Activated T-helper 2 cell treated with anti-CD3 and anti-CD28 coated beads, Interferon-gamma antibody, Interleukin-2, Interleukin-4, amounts not matched to agents 10 μg/mL and 5 μg/mL and 100 μg/mL, durations not matched to agents 14 hours and 24 hours and 36 hours (primary cell): ENCODE measurements at regions of chr7 and their contacts with region 1.

Region 1: GRCh38 chr7:105808703-105809590 is 67.5 kb downstream of the ATXN7L1 start:
- DNase-seq: peak; percentile 85
- H3K4me3 Mint-ChIP-seq: peak overlapping the region; percentile 26
- H3K27ac Mint-ChIP-seq: peak overlapping the region; percentile 81
- H3K4me1 Mint-ChIP-seq: peaks cover 76% of the 10 kb centered on the region
- H3K27me3 Mint-ChIP-seq: no peaks in the 10 kb centered on the region

Region 2: DNA sequence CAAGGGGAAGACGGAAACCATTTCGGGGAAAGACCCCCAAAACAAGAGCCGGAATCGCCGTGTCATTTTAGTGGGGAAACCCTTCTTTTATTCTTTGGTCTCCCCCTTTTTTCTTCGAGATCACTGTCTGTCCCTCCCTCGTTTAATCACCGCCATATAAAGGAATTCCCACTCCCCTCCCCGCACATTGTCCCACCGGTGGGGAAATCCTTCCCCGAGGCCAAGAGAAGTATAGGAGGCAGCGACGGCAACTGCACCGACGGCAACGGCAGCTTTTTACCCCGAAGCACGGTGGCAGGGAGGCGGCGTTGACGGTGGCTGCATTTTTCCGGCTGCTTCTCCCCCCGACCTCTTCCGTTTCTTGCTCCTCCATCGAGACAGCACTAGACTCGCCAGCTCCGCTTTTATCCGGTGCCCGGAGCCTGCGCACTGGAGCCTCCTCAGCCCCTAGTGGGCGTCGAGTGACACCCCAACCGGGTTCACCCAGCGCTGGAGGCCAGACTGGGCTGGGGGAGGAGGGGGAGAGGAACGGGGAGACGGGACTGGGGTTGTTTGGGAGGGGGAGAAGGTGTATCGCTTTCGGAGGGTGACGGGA is 795.6 kb before region 1 on chr7:
- intact Hi-C with region 1: loop called (anchors 5 kb)
- DNase-seq: peak; percentile 92
- H3K4me3 Mint-ChIP-seq: peak overlapping the region; percentile 91
- H3K27ac Mint-ChIP-seq: peak overlapping the region; percentile 100
- H3K4me1 Mint-ChIP-seq: peaks cover 35% of the 10 kb centered on the region
- H3K27me3 Mint-ChIP-seq: no peaks in the 10 kb centered on the region

Region 3: GRCh38 chr7:105691733-105692564 is 117.0 kb before region 1 on chr7:
- intact Hi-C with region 1: loop called (anchors 1 kb)
- DNase-seq: peak; percentile 44
- H3K4me3 Mint-ChIP-seq: peak overlapping the region; percentile 89
- H3K27ac Mint-ChIP-seq: peak overlapping the region; percentile 85
- H3K4me1 Mint-ChIP-seq: peaks cover 30% of the 10 kb centered on the region
- H3K27me3 Mint-ChIP-seq: no peaks in the 10 kb centered on the region

Region 4: GRCh38 chr7:105849122-105849855 is 40.3 kb after region 1 on chr7:
- intact Hi-C with region 1: loop called (anchors 1 kb)
- DNase-seq: peak; percentile 69
- H3K4me3 Mint-ChIP-seq: peak overlapping the region; percentile 37
- H3K27ac Mint-ChIP-seq: peak overlapping the region; percentile 75
- H3K4me1 Mint-ChIP-seq: peaks cover 58% of the 10 kb centered on the region
- H3K27me3 Mint-ChIP-seq: no peaks in the 10 kb centered on the region

Region 5: GRCh38 chr7:105924945-105925344 is 116.0 kb after region 1 on chr7:
- intact Hi-C with region 1: loop called (anchors 1 kb)
- DNase-seq: peak; percentile 32
- H3K4me3 Mint-ChIP-seq: no peak overlapping the region
- H3K27ac Mint-ChIP-seq: peak overlapping the region; percentile 4
- H3K4me1 Mint-ChIP-seq: peaks cover 19% of the 10 kb centered on the region
- H3K27me3 Mint-ChIP-seq: peaks cover 11% of the 10 kb centered on the region

Region 6: DNA sequence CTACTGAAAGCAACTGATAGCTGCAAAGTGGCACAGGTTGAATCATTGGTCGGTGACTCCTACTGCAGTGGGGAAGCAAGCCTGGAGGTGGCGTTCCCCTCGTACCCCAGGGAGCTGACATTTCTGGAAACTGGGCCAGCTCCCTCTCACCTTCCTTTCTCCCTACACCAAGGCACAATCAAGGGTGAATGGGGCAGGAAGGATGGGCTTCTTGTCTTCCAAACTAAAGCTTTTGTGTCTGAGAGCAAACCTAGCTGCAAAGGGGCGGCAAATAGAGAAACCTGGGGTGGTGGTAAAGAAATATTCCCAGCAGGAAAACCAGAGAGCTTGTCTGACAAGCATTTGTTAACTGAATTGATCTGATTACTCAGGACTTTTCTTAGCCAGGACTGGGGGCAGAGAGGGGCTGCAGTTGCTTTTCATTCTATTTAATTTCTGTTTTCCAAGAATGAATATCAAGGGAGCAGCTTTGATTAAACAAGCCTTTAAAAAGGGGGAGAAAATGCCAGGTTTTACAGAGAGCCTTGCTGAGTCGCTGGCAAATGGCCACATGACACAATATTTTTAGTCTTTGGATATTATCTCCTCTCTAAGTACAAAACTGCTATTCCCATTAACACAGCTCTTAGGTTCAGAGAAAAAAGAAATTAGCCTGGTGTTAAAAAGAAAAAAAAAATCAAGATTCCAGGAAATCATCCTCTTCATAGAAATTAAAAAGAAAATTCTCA is 181.9 kb after region 1 on chr7:
- intact Hi-C with region 1: no loop called
- DNase-seq: no peak
- H3K4me3 Mint-ChIP-seq: no peak overlapping the region
- H3K27ac Mint-ChIP-seq: no peak overlapping the region
- H3K4me1 Mint-ChIP-seq: no peaks in the 10 kb centered on the region
- H3K27me3 Mint-ChIP-seq: peaks cover 43% of the 10 kb centered on the region

Region 7: DNA sequence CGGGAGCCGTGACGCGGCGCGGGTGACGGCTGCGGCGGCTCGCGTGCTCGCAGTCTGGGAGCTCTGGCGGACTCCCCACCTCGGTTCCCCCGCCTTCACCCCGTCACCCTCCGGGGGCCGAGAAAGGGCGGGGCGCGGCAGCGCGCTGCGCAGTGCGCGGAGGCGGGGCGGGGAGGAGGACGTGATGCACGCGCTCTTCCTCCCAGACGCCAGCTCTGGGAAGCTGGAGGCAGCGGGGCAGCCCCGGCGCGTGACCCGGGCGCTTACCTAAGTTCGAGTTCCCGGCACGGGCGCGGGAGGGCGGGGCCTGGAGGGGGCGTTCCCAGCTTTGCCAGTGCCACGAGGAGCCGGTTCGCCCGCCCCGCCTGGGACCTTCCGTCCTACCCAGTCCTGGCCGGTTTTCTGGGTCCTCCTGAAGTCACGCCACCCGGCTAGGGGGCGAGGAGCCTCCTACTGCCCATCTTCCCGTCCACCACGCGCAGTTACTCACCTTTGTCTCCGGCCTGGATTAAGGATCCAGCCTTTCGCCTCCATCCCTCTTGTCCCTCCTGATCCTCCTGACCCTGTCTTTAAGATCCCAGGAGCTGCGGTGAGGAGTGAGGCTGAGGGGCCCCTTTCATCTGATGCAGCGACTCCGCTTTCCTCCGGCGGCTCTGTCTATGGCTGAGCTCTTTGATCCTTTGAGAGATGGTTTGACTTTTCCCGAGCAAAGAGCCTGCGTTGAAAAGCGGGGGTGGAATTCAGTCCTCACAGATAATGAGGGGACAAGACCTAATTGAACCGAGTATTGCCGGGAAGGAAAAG is 476.3 kb after region 1 on chr7:
- intact Hi-C with region 1: loop called (anchors 2 kb)
- DNase-seq: peak; percentile 95
- H3K4me3 Mint-ChIP-seq: peak overlapping the region; percentile 95
- H3K27ac Mint-ChIP-seq: peak overlapping the region; percentile 99
- H3K4me1 Mint-ChIP-seq: peaks cover 40% of the 10 kb centered on the region
- H3K27me3 Mint-ChIP-seq: no peaks in the 10 kb centered on the region

Region 8: GRCh38 chr7:106485031-106485551 is 676.1 kb after region 1 on chr7:
- intact Hi-C with region 1: loop called (anchors 1 kb)
- DNase-seq: no peak
- H3K4me3 Mint-ChIP-seq: no peak overlapping the region
- H3K27ac Mint-ChIP-seq: peak overlapping the region; percentile 69
- H3K4me1 Mint-ChIP-seq: peaks cover 53% of the 10 kb centered on the region
- H3K27me3 Mint-ChIP-seq: no peaks in the 10 kb centered on the region